ENCODE measurements at regions of chr5 and their contacts with region 1.

Region 1: DNA sequence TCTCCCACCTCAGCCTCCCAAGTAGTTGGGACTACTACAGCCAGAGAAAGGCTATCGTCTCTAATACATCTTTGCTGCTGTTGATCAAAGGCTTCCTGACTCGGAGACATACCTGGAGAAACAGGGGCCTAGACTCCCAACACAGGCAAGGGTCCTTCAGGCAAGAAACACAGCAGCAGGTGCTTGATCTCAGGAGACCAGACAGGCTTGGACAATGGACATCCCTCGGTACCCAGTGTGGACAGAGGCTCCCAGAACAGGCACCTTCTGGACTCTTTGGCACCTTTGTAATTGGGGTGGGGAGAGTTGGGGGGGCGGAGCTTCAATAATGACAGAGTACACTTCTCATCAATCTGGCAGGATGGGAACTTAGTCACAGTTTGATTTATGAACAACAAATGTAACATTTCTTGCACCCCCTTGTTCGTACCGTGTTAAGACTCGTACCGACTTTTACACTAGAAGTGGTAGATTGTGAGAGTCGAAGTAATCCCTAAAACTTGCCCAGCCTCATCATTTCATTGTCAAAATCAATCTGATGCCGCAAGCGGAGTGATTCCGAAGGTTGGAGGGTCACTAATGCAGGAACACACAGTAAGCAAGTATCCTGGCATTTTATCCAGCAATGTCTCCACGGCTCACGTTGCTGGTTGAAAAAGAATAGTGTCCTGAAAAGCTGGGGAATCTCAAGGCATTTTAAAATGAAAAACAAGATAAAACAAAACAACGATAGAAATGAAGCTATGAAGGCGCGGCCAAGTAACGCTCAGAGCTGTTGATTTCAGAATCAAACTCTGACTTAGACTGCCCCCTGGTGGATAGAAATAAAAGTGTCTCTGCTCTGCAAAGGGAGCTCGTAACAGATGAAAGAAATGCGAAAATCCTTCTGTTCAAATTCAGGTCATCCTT is 46.4 kb upstream of the STK32A start:
- DNase-seq: peak; percentile 62 to 82
- H3K4me3 ChIP-seq: no peak overlapping the region
- H3K4me3 Mint-ChIP-seq: peak overlapping the region; percentile 27
- H3K27ac Mint-ChIP-seq: peak overlapping the region; percentile 70
- H3K4me1 ChIP-seq: peaks cover 7% of the 10 kb centered on the region; the same call in 1 of the 2 replicates
- H3K4me1 Mint-ChIP-seq: peaks cover 21% of the 10 kb centered on the region
- H3K27me3 ChIP-seq: no peaks in the 10 kb centered on the region
- H3K27me3 Mint-ChIP-seq: no peaks in the 10 kb centered on the region
- CTCF ChIP-seq: peak; percentile 69 to 79

Region 2: GRCh38 chr5:146541958-146542849 is 646.2 kb before region 1 on chr5:
- CTCF ChIA-PET with region 1: interaction called, 21 read pairs
- POLR2A ChIA-PET with region 1: no interaction called
- intact Hi-C with region 1: loop called (anchors 1 kb)
- DNase-seq: peak; percentile 74 to 86
- H3K4me3 ChIP-seq: no peak overlapping the region
- H3K4me3 Mint-ChIP-seq: no peak overlapping the region
- H3K27ac Mint-ChIP-seq: no peak overlapping the region
- H3K4me1 ChIP-seq: no peaks in the 10 kb centered on the region; the same call in 1 of the 2 replicates
- H3K4me1 Mint-ChIP-seq: peaks cover 12% of the 10 kb centered on the region
- H3K27me3 ChIP-seq: no peaks in the 10 kb centered on the region
- H3K27me3 Mint-ChIP-seq: no peaks in the 10 kb centered on the region
- CTCF ChIP-seq: peak; percentile 87 to 91

Region 3: GRCh38 chr5:146818822-146819221 is 369.6 kb before region 1 on chr5:
- CTCF ChIA-PET with region 1: interaction called, 10 read pairs
- POLR2A ChIA-PET with region 1: no interaction called
- intact Hi-C with region 1: loop called (anchors 2 kb)
- DNase-seq: no peak
- H3K4me3 ChIP-seq: no peak overlapping the region
- H3K4me3 Mint-ChIP-seq: no peak overlapping the region
- H3K27ac Mint-ChIP-seq: no peak overlapping the region
- H3K4me1 ChIP-seq: no peaks in the 10 kb centered on the region
- H3K4me1 Mint-ChIP-seq: no peaks in the 10 kb centered on the region
- H3K27me3 ChIP-seq: no peaks in the 10 kb centered on the region
- H3K27me3 Mint-ChIP-seq: peaks cover 5% of the 10 kb centered on the region
- CTCF ChIP-seq: peak in 1 of 2 experiments; percentile 53

Region 4: GRCh38 chr5:147068998-147069397 is 119.5 kb before region 1 on chr5:
- CTCF ChIA-PET with region 1: interaction called, 11 read pairs
- POLR2A ChIA-PET with region 1: no interaction called
- intact Hi-C with region 1: no loop called
- DNase-seq: peak in 1 of 2 experiments; percentile 32
- H3K4me3 ChIP-seq: no peak overlapping the region
- H3K4me3 Mint-ChIP-seq: no peak overlapping the region
- H3K27ac Mint-ChIP-seq: peak overlapping the region; percentile 13
- H3K4me1 ChIP-seq: peaks cover 20% of the 10 kb centered on the region
- H3K4me1 Mint-ChIP-seq: peaks cover 10% of the 10 kb centered on the region
- H3K27me3 ChIP-seq: no peaks in the 10 kb centered on the region
- H3K27me3 Mint-ChIP-seq: no peaks in the 10 kb centered on the region
- CTCF ChIP-seq: no peak

Region 5: DNA sequence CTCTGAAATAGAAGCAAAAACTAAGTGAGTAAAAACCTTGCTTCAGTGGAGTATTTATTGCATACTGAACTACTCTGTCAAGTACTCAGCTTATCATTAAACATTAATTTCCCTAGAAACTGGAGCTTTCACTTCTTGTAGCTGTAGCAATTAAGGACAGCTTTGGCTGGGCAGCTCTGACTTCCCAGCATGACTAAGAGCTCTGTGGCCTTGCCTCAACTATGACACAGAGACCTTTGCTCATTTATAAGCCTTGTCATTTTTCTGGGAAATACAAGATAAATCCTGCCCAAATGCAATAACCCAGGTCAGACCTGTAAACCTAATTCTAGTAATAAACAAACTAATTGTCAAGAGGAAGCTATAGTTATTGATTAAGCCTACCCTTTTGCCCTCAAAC is 19.1 kb before region 1 on chr5:
- CTCF ChIA-PET with region 1: interaction called, 19 read pairs
- POLR2A ChIA-PET with region 1: no interaction called
- intact Hi-C with region 1: loop called (anchors 1 kb)
- DNase-seq: peak in 1 of 2 experiments; percentile 65
- H3K4me3 ChIP-seq: no peak overlapping the region
- H3K4me3 Mint-ChIP-seq: peak overlapping the region; percentile 18
- H3K27ac Mint-ChIP-seq: peak overlapping the region; percentile 97
- H3K4me1 ChIP-seq: peaks cover 69% of the 10 kb centered on the region
- H3K4me1 Mint-ChIP-seq: peaks cover 59% of the 10 kb centered on the region
- H3K27me3 ChIP-seq: no peaks in the 10 kb centered on the region
- H3K27me3 Mint-ChIP-seq: no peaks in the 10 kb centered on the region
- CTCF ChIP-seq: no peak

Region 6: GRCh38 chr5:147369742-147370374 is 181.4 kb after region 1 on chr5:
- CTCF ChIA-PET with region 1: interaction called, 11 read pairs
- POLR2A ChIA-PET with region 1: no interaction called
- intact Hi-C with region 1: loop called (anchors 1 kb)
- DNase-seq: no peak
- H3K4me3 ChIP-seq: no peak overlapping the region
- H3K4me3 Mint-ChIP-seq: no peak overlapping the region
- H3K27ac Mint-ChIP-seq: no peak overlapping the region
- H3K4me1 ChIP-seq: no peaks in the 10 kb centered on the region
- H3K4me1 Mint-ChIP-seq: peaks cover 13% of the 10 kb centered on the region
- H3K27me3 ChIP-seq: no peaks in the 10 kb centered on the region
- H3K27me3 Mint-ChIP-seq: no peaks in the 10 kb centered on the region
- CTCF ChIP-seq: peak; percentile 50 to 51

Measured in Caco-2 (cell line).